Ascending aorta (tissue), 2 donors: ENCODE measurements at regions of chr1 and their contacts with region 1.

Region 1: GRCh38 chr1:154558575-154559465 is at the start of gene UBE2Q1:
- DNase-seq: peak; percentile 98 to 99
- H3K4me3 ChIP-seq: peak within 1 kb of the TSS; percentile 93 to 97
- H3K27ac ChIP-seq: peak within 1 kb of the TSS; percentile 85 to 88
- H3K4me1 ChIP-seq: peaks cover 5 to 16% of the 10 kb centered on the region in 2 donors
- H3K27me3 ChIP-seq: no peaks in the 10 kb centered on the region
- CTCF ChIP-seq: no peak
- total RNA-seq, gene UBE2Q1: 10.6 TPM

Region 2: GRCh38 chr1:154220071-154220969 is 338.5 kb before region 1 on chr1 and contains the start of gene UBAP2L:
- intact Hi-C with region 1: loop called (anchors 1 kb)
- DNase-seq: peak; percentile 96 to 100
- H3K4me3 ChIP-seq: peak within 1 kb of the TSS; percentile 78 to 98
- H3K27ac ChIP-seq: peak within 1 kb of the TSS; percentile 96 to 98
- H3K4me1 ChIP-seq: peaks cover 20 to 25% of the 10 kb centered on the region in 2 donors
- H3K27me3 ChIP-seq: no peaks in the 10 kb centered on the region
- CTCF ChIP-seq: no peak
- total RNA-seq, gene UBAP2L: 67.8 TPM

Region 3: DNA sequence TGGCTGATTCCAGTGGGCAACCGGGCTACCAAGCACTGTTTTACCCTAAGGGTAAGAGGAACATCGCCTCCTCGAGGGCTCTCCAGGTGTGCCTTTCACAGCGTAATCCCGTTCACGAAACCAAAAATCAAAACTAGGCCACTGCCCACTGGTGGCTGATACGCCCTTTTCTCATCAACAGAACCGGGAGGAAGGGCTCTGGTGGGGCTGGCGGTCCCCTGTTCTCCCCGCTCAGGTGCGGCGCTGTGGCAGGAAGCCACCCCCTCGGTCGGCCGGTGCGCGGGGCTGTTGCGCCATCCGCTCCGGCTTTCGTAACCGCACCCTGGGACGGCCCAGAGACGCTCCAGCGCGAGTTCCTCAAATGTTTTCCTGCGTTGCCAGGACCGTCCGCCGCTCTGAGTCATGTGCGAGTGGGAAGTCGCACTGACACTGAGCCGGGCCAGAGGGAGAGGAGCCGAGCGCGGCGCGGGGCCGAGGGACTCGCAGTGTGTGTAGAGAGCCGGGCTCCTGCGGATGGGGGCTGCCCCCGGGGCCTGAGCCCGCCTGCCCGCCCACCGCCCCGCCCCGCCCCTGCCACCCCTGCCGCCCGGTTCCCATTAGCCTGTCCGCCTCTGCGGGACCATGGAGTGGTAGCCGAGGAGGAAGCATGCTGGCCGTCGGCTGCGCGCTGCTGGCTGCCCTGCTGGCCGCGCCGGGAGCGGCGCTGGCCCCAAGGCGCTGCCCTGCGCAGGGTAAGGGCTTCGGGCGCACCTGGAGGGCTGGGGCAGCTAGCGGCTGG is 153.6 kb before region 1 on chr1 and contains the start of gene IL6R:
- intact Hi-C with region 1: loop called (anchors 2 kb)
- DNase-seq: peak; percentile 75 to 97
- H3K4me3 ChIP-seq: peak within 1 kb of the TSS; percentile 69 to 73
- H3K27ac ChIP-seq: peak within 1 kb of the TSS; percentile 93 to 94
- H3K4me1 ChIP-seq: peaks cover 0 to 13% of the 10 kb centered on the region in 2 donors
- H3K27me3 ChIP-seq: no peaks in the 10 kb centered on the region
- CTCF ChIP-seq: peak; percentile 30 to 61 (median 50)
- total RNA-seq, gene IL6R: 6.7 TPM

Region 4: GRCh38 chr1:154627257-154628120 is 68.7 kb after region 1 on chr1:
- intact Hi-C with region 1: loop called (anchors 2 kb)
- DNase-seq: peak; percentile 41 to 94
- H3K4me3 ChIP-seq: peak overlapping the region; percentile 85 to 98
- H3K27ac ChIP-seq: peak overlapping the region; percentile 95 to 97
- H3K4me1 ChIP-seq: peaks cover 0 to 9% of the 10 kb centered on the region in 2 donors
- H3K27me3 ChIP-seq: no peaks in the 10 kb centered on the region
- CTCF ChIP-seq: no peak

Region 5: GRCh38 chr1:154878371-154879022 is 319.7 kb after region 1 on chr1:
- intact Hi-C with region 1: loop called (anchors 1 kb)
- DNase-seq: peak in 1 of 2 donors; percentile 88
- H3K4me3 ChIP-seq: no peak overlapping the region
- H3K27ac ChIP-seq: no peak overlapping the region
- H3K4me1 ChIP-seq: no peaks in the 10 kb centered on the region
- H3K27me3 ChIP-seq: no peaks in the 10 kb centered on the region
- CTCF ChIP-seq: peak; percentile 84 to 89 (median 88)

Region 6: DNA sequence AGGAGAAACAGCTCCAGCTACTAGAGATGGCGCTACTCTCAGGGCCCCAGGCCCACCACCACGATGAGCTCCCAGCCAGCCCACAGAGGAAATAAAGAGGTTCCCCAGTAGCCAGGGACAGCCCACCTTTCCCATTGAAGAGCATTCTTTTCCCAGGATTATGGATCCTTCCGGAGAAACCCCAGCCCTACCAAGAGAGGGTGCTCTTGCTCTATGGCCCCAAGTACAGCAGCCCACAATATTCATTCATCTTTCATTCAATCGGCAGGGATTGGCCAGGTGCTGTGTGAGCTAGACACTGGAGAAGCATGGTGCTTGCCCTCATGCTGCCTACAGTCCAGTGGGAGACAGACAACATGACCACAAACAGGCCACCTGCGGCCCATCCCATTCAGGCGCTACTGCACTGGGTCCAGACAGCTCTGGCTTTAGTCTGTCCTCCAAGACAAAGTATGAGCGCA is 347.8 kb after region 1 on chr1:
- intact Hi-C with region 1: no loop called
- DNase-seq: no peak
- H3K4me3 ChIP-seq: no peak overlapping the region
- H3K27ac ChIP-seq: no peak overlapping the region
- H3K4me1 ChIP-seq: no peaks in the 10 kb centered on the region
- H3K27me3 ChIP-seq: no peaks in the 10 kb centered on the region
- CTCF ChIP-seq: peak; percentile 16 to 25 (median 24)

Region 7: DNA sequence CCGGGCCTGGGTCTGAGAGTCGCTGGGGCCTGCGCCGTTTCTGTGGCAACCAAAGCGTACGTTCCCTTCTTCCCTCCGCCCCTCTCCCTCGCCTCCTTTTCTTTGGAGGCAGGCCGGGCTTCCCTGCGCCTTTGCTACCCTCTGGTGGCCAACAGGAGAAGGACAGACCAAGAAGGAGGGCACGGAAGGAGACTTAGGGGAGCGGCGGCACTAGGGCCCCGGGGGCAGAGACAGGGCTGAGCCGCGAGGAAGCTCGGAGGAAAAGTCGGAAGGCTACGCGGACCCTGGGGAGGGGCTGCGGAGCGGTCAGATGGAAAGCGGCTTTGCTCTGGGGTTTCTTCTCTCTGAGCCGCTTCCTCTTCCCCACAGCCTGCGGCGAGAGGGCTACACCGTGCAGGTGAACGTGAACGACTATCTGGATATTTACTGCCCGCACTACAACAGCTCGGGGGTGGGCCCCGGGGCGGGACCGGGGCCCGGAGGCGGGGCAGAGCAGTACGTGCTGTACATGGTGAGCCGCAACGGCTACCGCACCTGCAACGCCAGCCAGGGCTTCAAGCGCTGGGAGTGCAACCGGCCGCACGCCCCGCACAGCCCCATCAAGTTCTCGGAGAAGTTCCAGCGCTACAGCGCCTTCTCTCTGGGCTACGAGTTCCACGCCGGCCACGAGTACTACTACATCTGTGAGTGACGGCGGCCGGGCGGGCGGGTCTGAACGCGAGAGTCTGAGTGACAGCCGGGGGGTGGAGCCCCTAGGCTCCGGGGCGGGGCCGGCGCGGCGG is 526.1 kb after region 1 on chr1:
- intact Hi-C with region 1: loop called (anchors 2 kb)
- DNase-seq: peak; percentile 77 to 96
- H3K4me3 ChIP-seq: peak overlapping the region; percentile 66 to 81
- H3K27ac ChIP-seq: peak overlapping the region; percentile 79 to 83
- H3K4me1 ChIP-seq: peaks cover 24 to 33% of the 10 kb centered on the region in 2 donors
- H3K27me3 ChIP-seq: peaks cover 40% of the 10 kb centered on the region
- CTCF ChIP-seq: peak; percentile 93 to 98 (median 94)